ENCODE measurements at regions of chr9 and their contacts with region 1.

Region 1: GRCh38 chr9:22452415-22453010 is 5.9 kb downstream of the DMRTA1 start:
- DNase-seq: peak; percentile 51
- ATAC-seq: no peak

Region 2: GRCh38 chr9:22244141-22245011 is 208.1 kb before region 1 on chr9:
- intact Hi-C with region 1: loop called (anchors 10 kb)
- DNase-seq: no peak
- ATAC-seq: no peak

Region 3: DNA sequence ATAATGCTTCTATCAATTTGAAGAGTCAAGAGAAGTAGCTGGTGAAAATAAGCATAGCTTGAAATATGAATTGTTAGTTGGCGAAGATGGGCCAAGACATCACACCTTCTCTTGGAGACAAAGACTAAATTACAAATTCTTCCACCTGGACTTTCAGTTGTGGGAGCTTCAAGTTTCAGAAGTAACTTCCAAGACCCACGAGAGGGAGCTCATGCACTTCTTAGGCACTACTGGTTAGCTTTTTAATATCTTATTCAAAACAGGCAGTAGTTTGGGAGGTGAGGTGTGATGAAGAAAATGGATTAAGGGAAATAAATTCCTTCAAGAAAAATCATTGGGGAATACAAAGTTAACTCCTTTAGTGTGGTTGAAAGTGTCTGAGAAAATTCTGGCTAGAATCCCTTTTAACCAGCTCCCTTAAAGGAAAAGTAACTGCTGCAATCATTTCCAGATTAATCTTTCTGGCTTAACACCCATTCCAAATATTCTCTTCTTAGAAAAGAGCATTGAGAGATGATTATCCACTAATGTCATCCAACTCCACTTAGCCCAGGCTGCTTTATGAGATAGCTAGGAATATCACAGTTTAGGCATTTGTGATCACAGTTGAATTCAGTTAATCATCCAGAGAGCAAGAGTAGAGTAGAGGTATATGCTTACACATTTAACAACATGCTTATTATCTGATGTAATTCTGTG is 145.4 kb before region 1 on chr9:
- intact Hi-C with region 1: loop called (anchors 5 kb)
- DNase-seq: no peak
- ATAC-seq: no peak

Region 4: DNA sequence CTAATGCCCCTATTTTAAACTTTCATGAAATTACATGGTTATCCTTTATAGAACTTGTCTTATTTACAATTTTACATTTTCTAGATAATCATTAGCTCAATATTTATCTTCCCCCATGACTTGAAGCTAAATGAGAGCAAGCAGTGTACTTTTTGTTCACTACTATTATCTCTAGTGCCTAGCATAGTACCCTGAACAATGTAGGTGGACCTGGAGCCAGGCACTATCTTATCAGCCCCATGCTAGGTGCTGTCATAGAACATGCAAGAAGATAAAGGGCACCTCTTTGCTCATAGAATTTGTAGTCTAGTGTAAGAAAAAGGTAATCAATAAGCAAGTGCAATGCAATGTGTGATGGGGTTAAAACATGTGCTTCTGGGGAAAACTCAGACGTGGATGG is 973.6 kb after region 1 on chr9:
- intact Hi-C with region 1: no loop called
- DNase-seq: no peak
- ATAC-seq: no peak